ENCODE measurements at regions of chrX and their contacts with region 1.

Region 1: DNA sequence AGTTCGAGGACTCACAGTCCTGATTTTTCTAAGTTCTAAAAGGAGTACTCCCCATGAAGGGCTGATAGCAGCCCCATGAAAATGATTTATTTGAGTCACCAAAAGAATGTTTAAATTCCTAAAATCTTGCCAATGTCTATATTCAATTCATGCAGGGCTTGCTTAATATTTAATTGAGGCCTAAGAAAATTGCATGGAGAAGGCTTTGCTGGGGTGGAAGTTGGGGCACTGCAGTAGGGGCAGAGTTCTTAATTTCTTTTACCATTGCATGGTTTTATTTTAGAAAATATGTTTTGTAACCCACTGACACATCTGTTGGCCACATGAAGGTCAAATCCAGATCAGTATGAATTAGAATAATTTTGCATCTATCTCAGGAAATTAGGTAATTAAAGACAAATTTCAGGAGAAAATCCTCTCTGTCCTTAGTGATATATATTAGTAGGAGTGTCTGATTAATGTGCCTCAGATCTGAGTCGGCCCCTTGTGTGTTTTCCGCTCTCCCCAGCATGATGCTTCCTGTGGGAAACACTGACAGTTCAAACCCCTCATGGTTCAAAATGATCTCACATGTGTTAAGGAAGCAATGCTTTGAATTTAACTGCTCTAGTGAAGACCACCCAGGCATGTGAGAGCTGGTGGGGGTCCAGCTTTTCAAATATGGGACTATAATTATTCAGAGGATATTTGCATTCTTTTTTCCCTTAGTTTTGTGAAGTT is 54.0 kb upstream of the EGFL6 start:
- DNase-seq: no peak
- H3K4me3 ChIP-seq: no peak overlapping the region
- H3K27ac ChIP-seq: no peak overlapping the region
- H3K4me1 ChIP-seq: no peaks in the 10 kb centered on the region
- H3K27me3 ChIP-seq: peaks cover 0 to 9% (median 0%) of the 10 kb centered on the region in 7 donors
- CTCF ChIP-seq: no peak
- POLR2A ChIP-seq: no peak

Region 2: GRCh38 chrX:13283950-13284914 is 231.1 kb before region 1 on chrX:
- intact Hi-C with region 1: no loop called
- DNase-seq: no peak
- H3K4me3 ChIP-seq: no peak overlapping the region
- H3K27ac ChIP-seq: peak overlapping the region in 6 of 8 donors; percentile 13 to 72 (median 59)
- H3K4me1 ChIP-seq: peaks cover 0 to 12% (median 2%) of the 10 kb centered on the region in 6 donors
- H3K27me3 ChIP-seq: no peaks in the 10 kb centered on the region
- CTCF ChIP-seq: no peak
- POLR2A ChIP-seq: no peak

Region 3: GRCh38 chrX:13646154-13646549 is 130.8 kb after region 1 on chrX:
- intact Hi-C with region 1: loop called (anchors 10 kb)
- DNase-seq: no peak
- H3K4me3 ChIP-seq: no peak overlapping the region
- H3K27ac ChIP-seq: no peak overlapping the region
- H3K4me1 ChIP-seq: no peaks in the 10 kb centered on the region
- H3K27me3 ChIP-seq: peaks cover 0 to 17% (median 0%) of the 10 kb centered on the region in 7 donors
- CTCF ChIP-seq: peak in 9 of 11 experiments; percentile 22 to 62 (median 48)
- POLR2A ChIP-seq: no peak

Measured in spleen (tissue), 13 donors.